Prostate gland (tissue), 2 donors: ENCODE measurements at regions of chr16 and their contacts with region 1.

Region 1: GRCh38 chr16:48535831-48536613 is 74.0 kb downstream of the N4BP1 start:
- DNase-seq: peak; percentile 82
- H3K4me3 ChIP-seq: no peak overlapping the region
- H3K27ac ChIP-seq: peak overlapping the region; percentile 75 to 79
- H3K4me1 ChIP-seq: peaks cover 8% of the 10 kb centered on the region
- H3K27me3 ChIP-seq: no peaks in the 10 kb centered on the region
- CTCF ChIP-seq: no peak
- POLR2A ChIP-seq: no peak

Region 2: DNA sequence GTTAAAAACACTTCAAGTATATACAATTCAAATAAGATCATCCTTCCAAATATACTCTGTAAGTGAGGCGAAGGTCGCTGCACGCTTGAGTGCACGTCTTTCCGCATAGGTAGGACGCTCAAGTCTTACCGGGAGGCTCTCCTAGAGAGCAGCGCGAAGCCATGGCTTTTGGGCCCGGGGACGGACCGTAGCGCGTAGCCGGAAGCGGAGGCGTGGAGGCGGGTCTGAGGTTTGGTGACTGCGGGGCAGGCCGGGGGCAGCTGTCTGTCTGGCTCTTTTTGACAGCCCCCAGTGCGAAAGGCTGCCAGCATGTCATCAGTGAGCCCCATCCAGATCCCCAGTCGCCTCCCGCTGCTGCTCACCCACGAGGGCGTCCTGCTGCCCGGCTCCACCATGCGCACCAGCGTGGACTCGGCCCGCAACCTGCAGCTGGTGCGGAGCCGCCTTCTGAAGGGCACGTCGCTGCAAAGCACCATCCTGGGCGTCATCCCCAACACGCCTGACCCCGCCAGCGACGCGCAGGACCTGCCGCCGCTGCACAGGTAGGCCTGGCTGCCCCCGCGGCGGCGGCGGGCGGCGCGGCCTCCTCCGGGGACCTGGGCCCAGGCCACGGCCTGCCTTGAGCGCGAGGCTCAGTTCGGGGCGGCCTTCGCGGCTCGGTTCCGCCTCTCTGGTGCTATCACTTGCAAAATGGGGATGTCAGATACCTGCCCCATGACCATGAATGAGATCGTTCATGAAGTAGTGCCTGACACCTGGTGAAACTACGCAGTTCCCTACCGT is 291.8 kb before region 1 on chr16 and contains the start of gene LONP2:
- intact Hi-C with region 1: loop called (anchors 10 kb)
- DNase-seq: peak; percentile 88
- H3K4me3 ChIP-seq: peak within 1 kb of the TSS; percentile 79
- H3K27ac ChIP-seq: peak within 1 kb of the TSS; percentile 81 to 82
- H3K4me1 ChIP-seq: peaks cover 8% of the 10 kb centered on the region
- H3K27me3 ChIP-seq: no peaks in the 10 kb centered on the region
- CTCF ChIP-seq: no peak
- POLR2A ChIP-seq: peak; percentile 36
- total RNA-seq, gene LONP2: 74.6 to 81.0 TPM

Region 3: GRCh38 chr16:48365581-48366164 is 170.3 kb before region 1 on chr16:
- intact Hi-C with region 1: loop called (anchors 5 kb)
- DNase-seq: peak; percentile 92
- H3K4me3 ChIP-seq: peak overlapping the region; percentile 50 to 54
- H3K27ac ChIP-seq: peak overlapping the region; percentile 86 to 91
- H3K4me1 ChIP-seq: peaks cover 4% of the 10 kb centered on the region
- H3K27me3 ChIP-seq: no peaks in the 10 kb centered on the region
- CTCF ChIP-seq: peak in 1 of 4 experiments; percentile 21
- POLR2A ChIP-seq: peak; percentile 97

Region 4: DNA sequence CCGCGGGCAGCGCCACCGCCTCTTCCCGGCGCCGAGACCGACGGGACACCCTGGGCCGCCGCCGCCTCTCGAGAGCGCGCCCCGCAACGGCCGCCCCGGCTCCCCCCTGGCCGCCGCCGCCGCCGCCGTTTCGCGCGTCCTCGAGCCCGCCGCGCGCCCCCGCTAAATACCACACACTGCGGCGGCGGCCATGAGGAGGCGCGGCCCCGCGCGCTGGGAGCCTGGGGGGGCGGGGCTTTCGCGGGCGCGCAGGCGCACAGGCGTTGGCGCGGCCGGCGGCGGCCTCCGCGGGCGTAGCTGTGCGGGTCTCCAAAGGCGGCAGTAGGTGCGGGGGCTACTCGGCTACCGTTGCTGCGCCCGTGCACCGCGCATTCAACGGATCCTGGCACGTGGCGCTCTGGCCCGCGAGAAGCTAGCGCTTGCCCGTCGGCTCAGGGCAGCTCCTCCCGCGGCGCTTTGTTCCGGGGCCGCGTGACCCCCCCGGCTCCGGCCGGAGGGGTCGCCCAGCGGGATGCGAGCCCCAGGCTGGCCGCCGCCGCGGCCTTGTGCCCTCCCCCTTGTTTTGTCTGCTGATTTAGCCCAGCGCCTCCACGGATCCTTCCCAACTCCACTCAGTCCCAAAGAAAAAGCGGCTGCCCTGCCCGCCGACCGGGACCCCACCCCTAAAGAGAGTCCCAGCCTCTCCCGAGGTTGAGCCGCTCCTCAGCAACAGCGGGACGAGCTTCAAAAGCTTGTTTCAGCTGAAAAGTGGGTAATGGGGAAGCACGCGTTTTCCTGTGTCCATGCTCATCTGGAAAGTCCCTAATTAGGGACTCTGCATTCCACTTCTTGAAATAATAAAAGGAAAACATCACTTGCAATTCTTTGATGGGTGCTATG is 150.5 kb before region 1 on chr16 and contains the start of gene SIAH1:
- intact Hi-C with region 1: loop called (anchors 5 kb)
- DNase-seq: peak; percentile 81
- H3K4me3 ChIP-seq: peak within 1 kb of the TSS; percentile 73 to 93
- H3K27ac ChIP-seq: peak within 1 kb of the TSS; percentile 97 to 99
- H3K4me1 ChIP-seq: peaks cover 11% of the 10 kb centered on the region
- H3K27me3 ChIP-seq: no peaks in the 10 kb centered on the region
- CTCF ChIP-seq: peak in 1 of 4 experiments; percentile 11
- POLR2A ChIP-seq: peak; percentile 53
- total RNA-seq, gene SIAH1: 24.0 to 36.1 TPM

Region 5: DNA sequence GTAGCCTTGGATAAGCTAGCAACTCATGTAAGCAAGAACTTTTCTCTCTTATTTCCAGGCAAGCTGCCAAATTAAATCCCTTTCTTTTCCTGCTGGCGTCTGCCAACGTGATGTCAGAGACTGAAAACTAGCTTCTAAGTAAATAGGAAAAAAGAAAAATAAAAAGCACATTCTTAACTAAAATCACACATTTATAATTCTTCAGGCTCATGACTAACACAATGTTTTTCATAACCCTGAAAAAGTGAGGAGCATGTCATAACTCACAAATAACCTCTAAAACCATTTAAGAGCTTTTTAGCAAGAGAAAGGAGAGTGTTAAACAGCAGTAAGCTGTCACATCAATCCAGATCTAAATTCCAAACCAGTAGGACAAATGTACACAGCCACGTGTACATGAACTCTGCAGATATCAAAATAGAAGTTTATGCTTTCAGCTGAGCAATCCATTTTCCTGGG is 36.1 kb before region 1 on chr16:
- intact Hi-C with region 1: loop called (anchors 5 kb)
- DNase-seq: peak; percentile 66
- H3K4me3 ChIP-seq: no peak overlapping the region
- H3K27ac ChIP-seq: peak overlapping the region; percentile 37 to 61
- H3K4me1 ChIP-seq: peaks cover 9% of the 10 kb centered on the region
- H3K27me3 ChIP-seq: no peaks in the 10 kb centered on the region
- CTCF ChIP-seq: no peak
- POLR2A ChIP-seq: no peak

Region 6: DNA sequence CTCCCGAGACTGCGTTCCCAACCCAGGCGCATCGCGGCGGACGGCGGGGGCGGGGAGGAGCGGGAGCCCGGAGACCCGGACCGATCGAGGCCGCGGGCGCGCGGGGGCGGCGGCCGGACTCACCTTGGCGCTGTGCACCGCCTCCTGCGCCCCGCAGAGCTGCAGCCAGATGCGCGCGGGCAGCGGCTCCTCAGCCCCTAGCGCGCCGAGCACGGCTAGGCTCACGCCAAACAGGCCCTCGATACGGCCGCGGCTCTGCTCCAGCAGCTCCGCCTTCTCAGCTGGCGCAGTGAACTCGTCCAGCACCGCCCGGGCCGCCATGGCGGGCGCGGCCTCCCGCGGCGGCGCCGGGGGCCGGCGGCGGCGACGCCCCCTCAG is 73.6 kb after region 1 on chr16:
- intact Hi-C with region 1: loop called (anchors 5 kb)
- DNase-seq: peak; percentile 49
- H3K4me3 ChIP-seq: peak overlapping the region; percentile 89 to 94
- H3K27ac ChIP-seq: peak overlapping the region; percentile 87 to 90
- H3K4me1 ChIP-seq: peaks cover 27% of the 10 kb centered on the region
- H3K27me3 ChIP-seq: no peaks in the 10 kb centered on the region
- CTCF ChIP-seq: no peak
- POLR2A ChIP-seq: no peak

Region 7: DNA sequence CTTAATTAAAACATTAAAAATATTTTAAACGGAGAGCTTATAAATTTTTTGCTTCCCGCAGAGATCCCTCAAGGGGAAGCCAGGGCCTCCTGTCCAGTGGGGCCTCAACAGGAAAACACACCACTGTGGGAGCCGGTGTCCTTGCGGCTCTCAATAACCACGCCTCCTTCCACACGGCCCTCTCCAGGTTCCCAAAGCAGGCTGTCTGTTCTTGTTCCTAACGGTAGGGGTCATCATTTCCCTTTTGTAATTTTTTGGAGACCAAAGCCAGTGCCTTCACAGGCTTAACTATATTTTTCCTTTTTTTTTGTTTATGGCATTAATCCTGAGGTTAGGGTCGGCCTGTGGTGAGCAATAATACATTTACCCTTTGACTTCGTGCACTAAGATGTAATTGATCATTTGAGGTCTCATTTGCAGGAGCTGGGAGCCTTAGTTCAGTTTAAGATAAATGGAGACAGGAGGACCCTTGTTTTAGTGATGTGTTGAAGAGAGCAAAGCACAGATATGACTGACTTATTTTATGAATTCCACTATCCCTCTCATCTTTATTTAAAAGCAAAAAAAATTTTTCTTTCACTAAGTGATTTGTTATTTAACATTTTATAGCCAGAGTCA is 151.5 kb after region 1 on chr16:
- intact Hi-C with region 1: no loop called
- DNase-seq: peak; percentile 9
- H3K4me3 ChIP-seq: no peak overlapping the region
- H3K27ac ChIP-seq: no peak overlapping the region
- H3K4me1 ChIP-seq: no peaks in the 10 kb centered on the region
- H3K27me3 ChIP-seq: no peaks in the 10 kb centered on the region
- CTCF ChIP-seq: peak in 3 of 4 experiments; percentile 52 to 55 (median 55)
- POLR2A ChIP-seq: no peak